Mucosa of descending colon (tissue), 3 donors: ENCODE measurements at regions of chr11 and their contacts with region 1.

Region 1: DNA sequence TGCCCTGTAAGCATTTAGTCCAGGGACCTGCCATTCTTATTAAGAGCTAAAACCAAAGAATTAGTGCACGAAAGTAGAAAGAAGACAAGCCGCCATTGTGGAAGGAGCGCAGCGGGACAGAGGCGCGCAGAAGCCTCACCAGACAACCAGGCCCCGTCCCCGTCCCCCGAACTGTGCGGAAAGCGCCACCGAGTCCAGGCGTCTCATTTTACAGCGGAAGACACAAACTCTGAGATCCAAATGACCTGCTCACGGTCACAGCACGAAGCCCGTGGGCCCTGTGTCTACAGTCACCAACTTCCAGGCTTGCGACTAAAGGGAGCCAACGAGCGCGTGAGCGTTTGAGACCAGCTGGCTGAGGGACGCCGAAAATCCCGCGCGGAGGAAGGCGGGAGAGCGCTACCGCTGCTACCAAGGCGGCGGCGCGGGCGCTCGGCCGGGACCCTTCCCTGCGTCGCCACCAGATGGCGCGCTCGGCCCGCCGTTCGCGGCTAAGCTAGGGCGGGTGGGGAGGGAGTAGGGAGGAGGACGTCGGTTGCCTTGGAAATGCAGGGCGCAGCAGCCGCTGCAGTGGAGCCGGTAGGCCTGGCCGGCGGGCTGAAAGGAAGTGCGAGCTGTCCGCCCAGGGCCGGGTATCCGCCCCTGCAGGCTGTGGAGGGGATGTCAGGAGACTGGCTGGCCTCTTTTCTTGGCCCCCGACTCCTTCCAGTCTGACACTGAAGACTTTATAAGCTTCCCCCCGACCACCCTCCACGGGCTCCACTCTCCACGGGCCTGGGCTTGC is 434 bp upstream of the CCDC83 start:
- DNase-seq: peak; percentile 93 to 98 (median 94)
- ATAC-seq: peak; percentile 100
- H3K4me3 ChIP-seq: no peak overlapping the region
- H3K4me1 ChIP-seq: peaks cover 7% of the 10 kb centered on the region
- CTCF ChIP-seq: peak; percentile 96

Region 2: DNA sequence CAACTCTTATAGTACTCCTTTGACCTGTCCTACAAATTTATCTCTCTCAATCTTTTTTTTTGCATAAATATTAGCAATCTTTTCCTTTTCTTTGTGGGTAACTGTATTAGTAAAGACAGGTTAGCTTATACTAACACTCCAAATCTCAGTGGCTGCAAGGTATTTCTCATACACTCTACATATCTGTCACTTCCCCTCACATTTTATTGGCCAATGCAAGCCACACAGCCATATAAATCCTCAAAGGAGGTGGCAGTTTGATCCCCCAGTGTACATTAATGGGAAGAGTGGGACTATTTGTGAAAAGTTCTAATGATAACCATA is 347.2 kb after region 1 on chr11:
- intact Hi-C with region 1: no loop called
- DNase-seq: no peak
- ATAC-seq: peak; percentile 49
- H3K4me3 ChIP-seq: no peak overlapping the region
- H3K4me1 ChIP-seq: no peaks in the 10 kb centered on the region
- CTCF ChIP-seq: no peak

Region 3: GRCh38 chr11:86218125-86219084 is 363.7 kb after region 1 on chr11:
- intact Hi-C with region 1: loop called in 1 of 2 experiments (anchors 10 kb)
- DNase-seq: peak in 2 of 3 donors; percentile 70 to 80
- ATAC-seq: peak; percentile 95
- H3K4me3 ChIP-seq: no peak overlapping the region
- H3K4me1 ChIP-seq: peaks cover 3% of the 10 kb centered on the region
- CTCF ChIP-seq: peak; percentile 74